Calu3 (cell line): ENCODE measurements at regions of chr5 and their contacts with region 1.

Region 1: DNA sequence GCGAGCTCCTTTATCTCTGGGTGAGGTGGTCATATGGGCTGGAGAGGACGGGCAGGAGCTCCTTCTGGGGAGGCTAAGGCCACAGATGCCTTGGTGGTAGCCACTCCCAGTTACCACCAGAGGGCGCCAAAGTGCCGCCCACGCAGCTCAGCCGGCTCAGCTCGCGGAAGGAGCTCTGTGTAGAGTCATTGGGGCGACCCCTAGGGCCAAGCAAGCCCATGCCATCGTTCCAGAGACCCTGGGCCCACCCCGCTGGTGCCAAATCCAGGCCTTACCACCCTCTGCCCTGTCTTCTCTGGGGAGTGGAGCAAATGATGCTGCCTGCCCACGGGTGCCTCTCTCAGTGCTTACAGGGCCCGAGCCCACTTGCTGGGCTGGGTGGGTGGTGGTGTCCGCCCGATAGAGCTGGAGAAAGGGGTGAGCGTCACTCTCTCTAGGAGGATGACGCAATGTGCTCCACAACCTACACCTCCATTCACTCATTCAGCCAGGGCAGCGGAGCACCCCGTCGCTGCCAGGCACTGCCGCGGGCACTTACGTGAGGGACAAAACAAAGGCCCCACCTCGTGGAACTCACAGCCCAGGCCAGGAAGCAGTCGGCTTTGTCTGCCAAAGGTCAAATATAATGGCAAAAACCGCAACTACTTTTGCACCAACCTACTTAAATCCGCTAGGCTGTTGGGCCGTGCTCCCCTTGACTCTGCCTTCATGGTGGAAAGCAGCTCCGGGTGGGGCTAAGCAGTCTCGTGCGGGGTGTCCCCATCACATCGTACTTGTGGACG is 13.8 kb downstream of the TSPAN17 start:
- DNase-seq: peak; percentile 88
- H3K4me3 Mint-ChIP-seq: no peak overlapping the region
- H3K27ac Mint-ChIP-seq: no peak overlapping the region
- H3K4me1 Mint-ChIP-seq: peaks cover 19% of the 10 kb centered on the region
- H3K27me3 Mint-ChIP-seq: peaks cover 27% of the 10 kb centered on the region
- CTCF ChIP-seq: peak; percentile 99

Region 2: GRCh38 chr5:176693477-176693851 is 32.4 kb after region 1 on chr5:
- CTCF ChIA-PET with region 1: interaction called, 10 read pairs
- intact Hi-C with region 1: no loop called
- DNase-seq: peak; percentile 43
- H3K4me3 Mint-ChIP-seq: peak overlapping the region; percentile 66
- H3K27ac Mint-ChIP-seq: peak overlapping the region; percentile 73
- H3K4me1 Mint-ChIP-seq: peaks cover 29% of the 10 kb centered on the region
- H3K27me3 Mint-ChIP-seq: peaks cover 44% of the 10 kb centered on the region
- CTCF ChIP-seq: no peak

Region 3: GRCh38 chr5:176810084-176810597 is 149.1 kb after region 1 on chr5 and contains the start of gene UNC5A:
- CTCF ChIA-PET with region 1: interaction called, 17 read pairs
- intact Hi-C with region 1: loop called (anchors 2 kb)
- DNase-seq: peak; percentile 90
- H3K4me3 Mint-ChIP-seq: peak within 1 kb of the TSS; percentile 79
- H3K27ac Mint-ChIP-seq: peak within 1 kb of the TSS; percentile 43
- H3K4me1 Mint-ChIP-seq: peaks cover 42% of the 10 kb centered on the region
- H3K27me3 Mint-ChIP-seq: no peaks in the 10 kb centered on the region
- CTCF ChIP-seq: no peak
- total RNA-seq, gene UNC5A: 19.5 and 20.2 TPM in 2 replicates

Region 4: GRCh38 chr5:176901260-176902101 is 240.4 kb after region 1 on chr5:
- CTCF ChIA-PET with region 1: interaction called, 20 read pairs
- intact Hi-C with region 1: loop called (anchors 5 kb)
- DNase-seq: no peak
- H3K4me3 Mint-ChIP-seq: no peak overlapping the region
- H3K27ac Mint-ChIP-seq: no peak overlapping the region
- H3K4me1 Mint-ChIP-seq: peaks cover 44% of the 10 kb centered on the region
- H3K27me3 Mint-ChIP-seq: no peaks in the 10 kb centered on the region
- CTCF ChIP-seq: no peak

Region 5: GRCh38 chr5:177006265-177006972 is 345.4 kb after region 1 on chr5 and contains the start of gene UIMC1:
- CTCF ChIA-PET with region 1: interaction called, 11 read pairs
- intact Hi-C with region 1: no loop called
- DNase-seq: peak; percentile 98
- H3K4me3 Mint-ChIP-seq: peak within 1 kb of the TSS; percentile 99
- H3K27ac Mint-ChIP-seq: peak within 1 kb of the TSS; percentile 86
- H3K4me1 Mint-ChIP-seq: no peaks in the 10 kb centered on the region
- H3K27me3 Mint-ChIP-seq: no peaks in the 10 kb centered on the region
- CTCF ChIP-seq: no peak
- total RNA-seq, gene UIMC1: 51.3 and 59.0 TPM in 2 replicates